ACHN (cell line): ENCODE measurements at regions of chr10 and their contacts with region 1.

Region 1: DNA sequence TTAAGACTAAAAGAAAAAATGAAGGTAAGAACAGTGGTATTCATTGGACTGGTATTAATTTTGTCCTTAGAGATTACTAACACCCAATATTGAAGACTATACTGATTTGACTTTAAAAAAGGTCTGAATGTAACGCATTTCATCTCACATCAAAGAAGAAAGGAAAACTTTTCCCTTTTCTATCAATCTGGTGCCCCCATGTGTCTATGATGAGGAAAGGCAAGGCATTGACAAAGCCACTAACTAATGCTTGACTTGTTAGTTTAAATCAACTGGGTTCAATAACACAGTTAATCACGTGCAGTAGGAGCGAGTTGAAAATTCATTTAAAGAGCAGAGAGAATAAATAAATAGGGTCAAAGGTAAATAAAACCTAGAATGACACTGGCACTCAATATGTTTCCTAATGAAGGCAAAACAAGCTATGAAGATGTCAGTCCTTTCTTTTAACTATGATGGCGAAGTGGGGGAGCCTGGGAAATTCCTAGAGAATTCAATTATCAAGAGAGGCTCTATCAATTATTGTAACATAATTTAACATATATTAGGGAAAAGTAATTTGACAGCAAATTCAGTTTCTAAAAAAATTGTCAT is 180.9 kb downstream of the ANK3 start:
- DNase-seq: peak; percentile 64

Region 2: GRCh38 chr10:60048091-60048501 is 160.7 kb before region 1 on chr10:
- in situ Hi-C with region 1: no loop called
- DNase-seq: peak; percentile 62

Region 3: DNA sequence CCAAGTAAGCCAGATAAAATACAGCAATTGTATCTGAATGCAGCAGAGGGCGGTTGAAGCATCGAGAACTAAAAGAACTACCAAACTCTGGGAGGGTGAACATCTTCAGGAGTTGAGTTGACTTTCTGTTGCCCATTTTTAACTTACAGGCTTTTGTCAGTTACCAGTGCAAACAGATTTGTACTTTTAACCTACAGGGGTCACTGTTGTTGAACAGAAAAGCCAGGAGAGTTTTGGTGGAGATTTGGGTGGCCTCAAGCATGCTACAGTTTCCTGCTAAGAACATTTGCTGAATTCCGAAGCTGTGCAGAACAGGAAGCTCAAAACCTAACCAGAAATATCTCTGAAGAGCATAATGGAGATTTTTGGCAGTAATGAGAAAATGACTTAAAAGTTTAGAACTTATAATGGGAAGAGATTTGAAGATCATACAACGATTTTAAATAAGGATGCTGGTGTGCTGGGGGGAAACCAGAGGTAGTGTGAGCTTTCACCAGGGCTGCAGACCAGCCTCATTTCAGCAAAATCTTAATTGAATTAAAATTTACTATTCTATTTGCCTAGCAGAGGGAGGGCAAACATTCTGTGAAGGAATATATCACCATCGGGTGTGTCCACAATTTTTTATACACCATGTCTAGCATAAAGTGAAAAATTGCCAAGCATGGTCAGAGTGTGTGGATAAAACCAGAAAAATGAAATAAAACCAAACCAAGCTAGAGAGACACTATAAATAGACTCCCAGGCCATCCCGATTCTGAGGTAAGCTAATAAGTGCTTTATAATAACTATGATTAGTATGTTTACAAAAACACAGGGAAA is 93.8 kb before region 1 on chr10:
- in situ Hi-C with region 1: loop called (anchors 25 kb)
- DNase-seq: peak; percentile 64

Region 4: GRCh38 chr10:60434418-60435046 is 225.8 kb after region 1 on chr10:
- in situ Hi-C with region 1: loop called (anchors 25 kb)
- DNase-seq: peak; percentile 71